ENCODE measurements at regions of chr9 and their contacts with region 1.

Region 1: DNA sequence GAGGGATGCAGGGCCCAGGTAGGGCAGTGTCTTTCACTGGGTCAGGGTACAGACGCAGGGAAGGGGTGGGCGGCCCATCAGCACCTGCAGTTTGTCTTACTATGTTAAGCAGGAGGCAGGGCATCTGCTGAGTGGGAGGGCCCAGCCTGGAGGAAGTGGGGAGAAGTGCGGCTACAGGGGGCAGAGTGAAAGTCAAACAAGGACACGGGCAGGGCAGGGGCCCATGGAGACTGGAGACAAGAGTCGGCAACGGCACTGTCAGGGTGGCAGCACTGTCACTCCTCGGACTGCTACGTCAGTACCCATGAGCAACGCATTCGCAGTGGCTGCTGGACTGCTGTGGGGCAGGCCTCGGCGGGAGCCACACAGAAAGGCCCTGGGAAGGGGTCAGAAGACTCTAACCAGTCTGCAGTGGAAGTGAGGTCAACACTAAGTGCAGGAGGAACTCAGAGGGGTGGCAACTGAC is 19.7 kb downstream of the CAMSAP1 start:
- DNase-seq: peak; percentile 82 to 86 (median 83)
- H3K4me3 ChIP-seq: peak overlapping the region; percentile 1 to 70 (median 28)
- H3K4me3 Mint-ChIP-seq: peak overlapping the region; percentile 72 to 89
- H3K27ac ChIP-seq: peak overlapping the region; percentile 82 to 86
- H3K27ac Mint-ChIP-seq: peak overlapping the region; percentile 91 to 96 (median 95)
- H3K4me1 ChIP-seq: peaks cover 31 to 43% of the 10 kb centered on the region in 2 donors
- H3K4me1 Mint-ChIP-seq: peaks cover 65% of the 10 kb centered on the region
- H3K27me3 ChIP-seq: no peaks in the 10 kb centered on the region
- H3K27me3 Mint-ChIP-seq: peaks cover 0 to 2% (median 0%) of the 10 kb centered on the region in 3 donors
- CTCF ChIP-seq: no peak

Region 2: DNA sequence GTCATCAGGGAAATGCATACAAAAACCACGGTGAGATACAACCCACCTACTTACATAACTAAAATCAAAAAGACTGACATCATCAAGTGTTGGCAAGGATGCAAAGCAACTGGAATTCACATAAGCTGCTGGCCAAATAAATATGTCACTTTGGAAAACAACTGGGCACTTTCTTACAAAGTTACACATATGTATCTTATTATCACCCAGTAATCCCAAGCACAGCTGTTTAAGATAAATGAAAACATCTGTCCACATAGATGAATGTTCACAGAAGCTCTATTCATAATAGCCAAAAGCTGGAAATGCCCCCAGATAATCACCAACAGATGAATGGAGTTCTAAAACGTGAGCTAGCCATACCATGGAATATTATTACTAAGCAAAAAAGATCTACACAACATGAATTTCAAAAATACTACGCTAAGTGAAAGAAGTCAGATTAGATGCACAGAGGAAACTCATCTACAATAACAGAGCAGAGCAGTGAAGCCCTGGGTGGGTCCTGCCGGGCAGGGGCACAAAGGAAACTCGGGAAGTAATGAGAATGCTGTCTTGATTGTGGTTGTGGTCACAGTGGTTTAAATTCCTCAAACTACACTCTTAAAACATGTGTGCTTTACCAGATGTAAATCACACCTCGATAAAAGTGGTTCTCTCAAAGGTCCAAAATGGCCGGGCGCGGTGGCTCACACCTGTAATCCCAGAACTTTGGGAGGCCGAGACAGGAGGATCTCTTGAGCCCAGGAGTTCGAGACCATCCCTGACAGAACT is 11.2 kb after region 1 on chr9:
- intact Hi-C with region 1: loop called (anchors 1 to 2 kb)
- DNase-seq: no peak
- H3K4me3 ChIP-seq: no peak overlapping the region
- H3K4me3 Mint-ChIP-seq: no peak overlapping the region
- H3K27ac ChIP-seq: no peak overlapping the region
- H3K27ac Mint-ChIP-seq: peak overlapping the region in 1 of 7 donors; percentile 69
- H3K4me1 ChIP-seq: peaks cover 4 to 30% of the 10 kb centered on the region in 2 donors
- H3K4me1 Mint-ChIP-seq: peaks cover 34% of the 10 kb centered on the region
- H3K27me3 ChIP-seq: no peaks in the 10 kb centered on the region
- H3K27me3 Mint-ChIP-seq: no peaks in the 10 kb centered on the region
- CTCF ChIP-seq: no peak